ENCODE measurements at regions of chr12 and their contacts with region 1.

Region 1: GRCh38 chr12:81588235-81589008 is 170.7 kb downstream of the PPFIA2 start:
- DNase-seq: no peak
- ATAC-seq: no peak
- H3K4me3 ChIP-seq: no peak overlapping the region
- H3K27ac ChIP-seq: no peak overlapping the region
- H3K4me1 ChIP-seq: no peaks in the 10 kb centered on the region
- H3K27me3 ChIP-seq: no peaks in the 10 kb centered on the region
- CTCF ChIP-seq: no peak
- POLR2A ChIP-seq: no peak
- RAD21 ChIP-seq: no peak

Region 2: DNA sequence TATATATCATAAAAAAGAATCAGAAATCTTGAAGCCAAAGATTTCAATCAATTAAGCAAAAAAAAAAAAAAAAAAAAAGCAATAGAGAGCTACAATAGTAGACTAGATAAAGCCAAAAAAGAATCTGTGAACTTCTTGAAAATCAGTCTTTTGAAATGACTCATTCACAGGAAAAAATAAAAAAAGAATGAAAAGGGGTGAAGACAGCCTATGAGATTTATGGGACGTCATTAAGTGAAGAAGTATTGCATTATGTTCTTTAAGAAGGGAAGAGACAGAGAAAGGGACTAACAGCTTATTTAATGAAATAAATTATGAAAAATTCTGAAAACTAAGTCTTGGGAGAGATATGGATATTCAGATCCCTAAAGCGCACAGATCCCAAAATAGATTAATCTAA is 406.7 kb before region 1 on chr12:
- CTCF ChIA-PET with region 1: no interaction called
- POLR2A ChIA-PET with region 1: no interaction called
- RAD21 ChIA-PET with region 1: no interaction called
- intact Hi-C with region 1: loop called (anchors 10 kb)
- DNase-seq: no peak
- ATAC-seq: no peak
- H3K4me3 ChIP-seq: no peak overlapping the region
- H3K27ac ChIP-seq: no peak overlapping the region
- H3K4me1 ChIP-seq: no peaks in the 10 kb centered on the region
- H3K27me3 ChIP-seq: no peaks in the 10 kb centered on the region
- CTCF ChIP-seq: no peak
- POLR2A ChIP-seq: no peak
- RAD21 ChIP-seq: no peak

Region 3: GRCh38 chr12:81610955-81611889 is 22.8 kb after region 1 on chr12:
- CTCF ChIA-PET with region 1: no interaction called
- POLR2A ChIA-PET with region 1: no interaction called
- RAD21 ChIA-PET with region 1: no interaction called
- intact Hi-C with region 1: no loop called
- DNase-seq: no peak
- ATAC-seq: peak; percentile 93
- H3K4me3 ChIP-seq: no peak overlapping the region
- H3K27ac ChIP-seq: no peak overlapping the region
- H3K4me1 ChIP-seq: no peaks in the 10 kb centered on the region
- H3K27me3 ChIP-seq: no peaks in the 10 kb centered on the region
- CTCF ChIP-seq: peak in 2 of 3 experiments; percentile 42 to 47; a peak in 3 of 6 replicates
- POLR2A ChIP-seq: no peak
- RAD21 ChIP-seq: peak; percentile 24

Measured in HCT116 (cell line).